ENCODE measurements at regions of chr7 and their contacts with region 1.

Region 1: GRCh38 chr7:76020031-76020714 is 25.8 kb upstream of the TMEM120A start:
- DNase-seq: no peak
- H3K4me3 ChIP-seq: no peak overlapping the region
- CTCF ChIP-seq: peak; percentile 84

Region 2: DNA sequence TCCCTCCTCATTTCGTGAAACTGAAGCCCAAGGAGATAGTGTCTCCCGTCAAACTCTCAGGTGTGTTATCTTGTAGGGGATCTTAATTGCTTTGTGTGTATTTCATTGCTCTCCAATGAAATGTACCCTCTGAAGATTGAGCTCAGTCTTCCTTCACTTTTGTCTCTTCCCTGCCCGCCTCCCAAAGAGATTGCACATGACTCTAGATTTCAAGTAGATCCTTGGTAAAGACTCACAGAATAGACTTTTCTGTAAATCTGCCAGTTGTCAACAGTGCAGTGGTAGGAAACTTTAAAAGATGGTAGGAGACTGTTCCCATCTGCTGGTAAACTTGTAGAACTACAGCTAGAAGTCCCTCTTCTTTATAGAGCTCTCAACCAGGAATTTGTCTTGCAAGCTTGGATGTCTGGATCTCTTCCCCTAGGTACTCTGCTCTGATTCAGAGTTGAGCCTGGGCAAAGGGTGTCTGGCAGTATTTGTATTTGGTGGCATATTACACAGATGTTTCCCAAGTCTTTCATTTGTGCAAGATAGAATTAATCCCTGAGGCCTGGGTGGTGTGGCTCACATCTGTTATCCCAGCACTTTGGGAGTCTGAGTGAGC is 257.8 kb before region 1 on chr7:
- CTCF ChIA-PET with region 1: interaction called, 11 read pairs
- POLR2A ChIA-PET with region 1: no interaction called
- DNase-seq: no peak
- H3K4me3 ChIP-seq: no peak overlapping the region
- CTCF ChIP-seq: peak; percentile 69

Region 3: GRCh38 chr7:75866489-75867389 is 153.4 kb before region 1 on chr7:
- CTCF ChIA-PET with region 1: interaction called, 229 read pairs
- POLR2A ChIA-PET with region 1: interaction called, 3 read pairs
- DNase-seq: no peak
- H3K4me3 ChIP-seq: no peak overlapping the region
- CTCF ChIP-seq: peak; percentile 94

Region 4: DNA sequence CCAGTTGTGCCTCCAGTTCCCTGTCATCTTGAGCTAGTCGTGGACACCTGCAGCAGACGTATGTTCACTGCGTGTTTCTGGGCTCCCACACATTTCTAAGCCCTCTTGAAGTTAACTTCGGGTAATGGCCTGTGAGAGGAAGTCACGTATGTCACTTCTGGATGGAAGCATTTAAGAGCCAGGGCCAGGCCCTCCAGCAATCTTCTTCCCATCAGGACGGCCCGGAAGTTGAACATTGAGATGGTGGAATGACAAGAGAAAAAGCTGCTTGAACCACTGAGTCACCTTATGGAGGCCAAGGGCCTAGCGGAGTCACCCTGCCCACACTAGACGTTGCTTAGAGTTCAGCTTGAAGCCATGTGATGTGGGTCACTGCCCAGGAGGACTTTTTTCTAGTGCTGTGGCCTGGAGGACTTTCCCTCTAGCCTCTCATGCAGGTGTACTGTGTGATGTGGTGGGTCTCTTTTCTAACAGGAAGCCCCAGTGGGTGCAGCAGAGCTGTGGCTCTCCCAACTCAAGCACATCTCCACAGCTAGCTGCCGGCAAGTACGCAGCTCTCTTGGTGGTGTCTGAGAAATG is 91.8 kb before region 1 on chr7:
- CTCF ChIA-PET with region 1: no interaction called
- POLR2A ChIA-PET with region 1: no interaction called
- DNase-seq: no peak
- H3K4me3 ChIP-seq: no peak overlapping the region
- CTCF ChIP-seq: no peak

Region 5: GRCh38 chr7:76031964-76032363 is 11.8 kb after region 1 on chr7:
- CTCF ChIA-PET with region 1: interaction called, 30 read pairs
- POLR2A ChIA-PET with region 1: interaction called, 4 read pairs
- DNase-seq: no peak
- H3K4me3 ChIP-seq: no peak overlapping the region
- CTCF ChIP-seq: no peak

Region 6: DNA sequence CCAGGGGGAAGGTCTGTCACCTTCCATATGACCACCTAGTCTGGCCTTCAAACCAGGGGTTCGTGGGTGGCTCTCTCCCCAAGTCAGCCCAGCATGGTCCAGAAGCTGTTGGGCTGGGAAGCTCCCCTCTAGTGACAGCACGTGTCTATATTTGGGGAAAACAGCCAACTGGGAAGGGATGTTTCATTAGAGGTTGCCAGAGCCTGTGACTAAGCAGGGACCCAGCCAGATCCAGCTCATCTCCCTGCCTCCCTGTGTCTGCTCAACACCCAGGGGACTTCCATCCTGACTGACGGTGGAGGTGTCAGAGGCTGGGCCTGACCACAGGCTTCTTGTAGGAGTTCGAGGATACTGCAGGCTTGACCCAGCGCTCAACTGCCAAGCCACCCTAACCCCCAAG is 17.1 kb after region 1 on chr7:
- CTCF ChIA-PET with region 1: interaction called, 30 read pairs
- POLR2A ChIA-PET with region 1: interaction called, 4 read pairs
- DNase-seq: peak; percentile 67
- H3K4me3 ChIP-seq: no peak overlapping the region
- CTCF ChIP-seq: no peak

Region 7: GRCh38 chr7:76047811-76048667 is 27.9 kb after region 1 on chr7 and contains the starts of genes MDH2 and STYXL1:
- CTCF ChIA-PET with region 1: interaction called, 11 read pairs
- POLR2A ChIA-PET with region 1: no interaction called
- DNase-seq: peak; percentile 63
- H3K4me3 ChIP-seq: peak within 1 kb of the TSS; percentile 94
- CTCF ChIP-seq: no peak

Region 8: DNA sequence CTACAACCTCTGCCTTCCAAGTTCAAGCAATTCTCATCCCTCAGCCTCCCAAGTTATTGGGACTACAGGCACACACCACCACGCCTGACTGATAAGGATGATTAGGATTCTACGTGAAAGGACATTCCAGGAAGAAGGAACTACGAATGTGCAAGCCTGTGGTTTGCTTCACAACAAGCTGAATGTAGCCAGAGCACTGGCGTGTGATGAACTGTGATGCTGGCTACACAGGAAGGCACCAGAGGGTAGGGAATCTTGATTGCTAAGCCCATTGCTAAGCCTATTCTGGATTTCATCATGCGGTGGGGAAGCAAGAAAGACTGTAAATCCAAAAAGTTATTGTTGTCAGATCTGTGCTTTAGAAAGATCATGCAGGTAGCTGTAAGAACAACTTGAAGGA is 109.2 kb after region 1 on chr7:
- CTCF ChIA-PET with region 1: interaction called, 10 read pairs
- POLR2A ChIA-PET with region 1: no interaction called
- DNase-seq: no peak
- H3K4me3 ChIP-seq: no peak overlapping the region
- CTCF ChIP-seq: no peak